K562 (cell line): ENCODE measurements at regions of chr14 and their contacts with region 1.

Region 1: DNA sequence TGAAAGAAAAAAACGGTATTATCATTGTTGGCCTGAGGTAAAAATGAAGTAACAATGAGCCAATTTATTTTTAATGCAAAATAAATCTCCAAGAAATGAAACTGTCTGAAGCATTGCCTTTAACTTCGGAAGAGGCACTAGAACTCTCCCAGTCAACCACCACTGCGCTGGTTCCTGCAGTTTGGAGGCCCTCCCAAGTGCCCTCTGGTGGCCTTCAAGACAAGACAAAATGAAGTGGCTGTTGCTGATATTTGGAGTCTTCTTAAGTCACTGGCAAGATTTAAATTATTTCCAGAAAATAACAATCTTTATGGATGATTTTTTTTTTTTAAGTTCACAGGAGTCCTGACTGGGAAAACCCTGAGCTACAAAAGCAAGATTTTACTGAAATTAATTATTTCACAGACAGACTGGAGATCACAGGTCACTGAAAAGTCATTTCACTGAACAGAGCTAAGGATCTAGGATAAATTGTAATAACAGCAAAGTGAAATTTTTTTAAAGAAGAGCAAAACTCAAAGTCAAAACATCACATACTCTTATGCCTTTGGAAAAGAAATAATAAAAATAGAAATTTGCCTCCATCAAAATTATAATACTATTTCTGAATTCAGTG is 58.2 kb downstream of the DICER1 start:
- DNase-seq: peak; percentile 14 to 66 (median 23)
- ATAC-seq: peak; percentile 94
- H3K4me3 ChIP-seq: no peak overlapping the region
- H3K27ac ChIP-seq: no peak overlapping the region
- H3K4me1 ChIP-seq: no peaks in the 10 kb centered on the region
- H3K27me3 ChIP-seq: no peaks in the 10 kb centered on the region
- CTCF ChIP-seq: peak; percentile 63 to 78 (median 63)
- EP300 ChIP-seq: no peak
- POLR2A ChIP-seq: no peak
- RAD21 ChIP-seq: peak; percentile 41 to 55

Region 2: GRCh38 chr14:95034788-95035187 is 64.3 kb before region 1 on chr14:
- CTCF ChIA-PET with region 1: no interaction called
- POLR2A ChIA-PET with region 1: no interaction called
- in situ Hi-C with region 1: no loop called
- intact Hi-C with region 1: no loop called
- DNase-seq: no peak
- ATAC-seq: no peak
- H3K4me3 ChIP-seq: no peak overlapping the region
- H3K27ac ChIP-seq: no peak overlapping the region
- H3K4me1 ChIP-seq: no peaks in the 10 kb centered on the region
- H3K27me3 ChIP-seq: peaks cover 0 to 13% of the 10 kb centered on the region in 2 experiments; a peak in 2 of 5 replicates
- CTCF ChIP-seq: no peak
- EP300 ChIP-seq: no peak
- POLR2A ChIP-seq: no peak
- RAD21 ChIP-seq: no peak

Region 3: DNA sequence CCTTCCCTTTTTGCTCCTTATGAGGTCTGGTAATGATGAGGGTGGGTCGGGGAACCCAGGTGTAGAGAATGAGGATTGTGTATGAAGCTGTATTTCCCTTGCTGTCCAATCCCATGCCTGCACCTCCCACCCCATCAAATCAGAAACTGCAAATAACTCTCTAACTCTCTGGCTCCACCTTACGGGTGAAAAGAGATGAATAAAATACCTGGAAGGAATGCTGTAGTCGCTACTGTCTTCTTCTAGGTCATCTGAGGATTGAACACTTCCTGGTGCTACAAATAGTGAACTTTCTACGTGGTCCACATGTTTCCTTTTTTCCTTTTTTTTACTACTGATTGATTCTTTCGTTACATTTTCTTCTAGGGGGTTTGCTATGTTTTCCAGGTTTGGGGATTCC is 97.2 kb after region 1 on chr14:
- CTCF ChIA-PET with region 1: no interaction called
- POLR2A ChIA-PET with region 1: no interaction called
- in situ Hi-C with region 1: no loop called
- intact Hi-C with region 1: loop called (anchors 10 kb)
- DNase-seq: peak; percentile 31 to 48 (median 36)
- ATAC-seq: peak; percentile 88
- H3K4me3 ChIP-seq: no peak overlapping the region
- H3K27ac ChIP-seq: no peak overlapping the region
- H3K4me1 ChIP-seq: no peaks in the 10 kb centered on the region
- H3K27me3 ChIP-seq: peaks cover 3 to 21% of the 10 kb centered on the region in 2 experiments; a peak in 3 of 5 replicates
- CTCF ChIP-seq: peak; percentile 39 to 58 (median 40); a peak in 4 of 6 replicates
- EP300 ChIP-seq: no peak
- POLR2A ChIP-seq: no peak
- RAD21 ChIP-seq: peak; percentile 52 to 73